Colonic mucosa (tissue), 4 donors: ENCODE measurements at regions of chr7 and their contacts with region 1.

Region 1: DNA sequence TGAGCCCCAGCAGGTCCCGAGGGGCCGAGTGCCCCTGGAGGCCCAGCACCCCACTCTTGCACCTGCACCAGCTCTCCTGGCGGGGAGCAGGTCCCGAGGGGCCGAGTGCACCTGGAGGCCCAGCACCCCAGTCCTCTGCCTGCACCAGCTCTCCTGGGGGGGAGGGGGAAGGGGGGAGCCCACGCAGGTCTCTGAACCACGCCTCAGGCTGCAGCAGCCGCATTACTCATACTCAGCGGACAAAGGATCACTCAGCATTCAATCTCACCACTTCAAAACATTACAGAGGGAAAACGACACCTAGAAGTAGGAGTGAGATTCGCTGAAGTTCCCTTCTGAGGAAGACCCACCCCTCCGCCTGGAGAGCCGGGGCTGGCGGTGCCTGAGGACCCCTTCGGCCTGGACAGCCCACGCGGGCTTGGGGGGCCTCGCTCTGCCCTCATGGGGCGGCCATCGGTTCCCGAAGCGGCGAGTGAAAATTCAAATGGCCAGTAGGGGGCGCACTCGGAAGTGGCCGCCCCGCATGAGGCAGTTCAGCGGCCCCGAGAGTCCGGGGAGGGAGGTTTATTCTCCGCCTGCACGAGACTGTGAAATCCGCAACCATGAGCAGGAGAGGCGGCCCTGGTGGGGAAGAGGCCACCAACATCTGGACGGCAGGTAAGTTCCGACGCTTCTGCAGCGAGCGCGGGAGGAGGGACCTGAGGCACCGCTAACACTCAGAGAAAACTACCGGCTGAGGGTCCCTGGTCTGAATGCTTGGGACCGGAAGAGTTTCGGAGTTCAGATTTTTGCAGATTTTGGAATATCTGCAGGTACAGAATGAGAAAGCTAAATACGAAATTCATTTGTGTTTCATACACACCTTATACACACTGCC is 1.1 kb upstream of the GPER1 start:
- DNase-seq: peak; percentile 85
- H3K4me3 ChIP-seq: peak overlapping the region; percentile 30
- H3K27ac ChIP-seq: no peak overlapping the region
- H3K4me1 ChIP-seq: no peaks in the 10 kb centered on the region
- H3K27me3 ChIP-seq: no peaks in the 10 kb centered on the region
- CTCF ChIP-seq: peak; percentile 82

Region 2: GRCh38 chr7:1159891-1160668 is 73.3 kb after region 1 on chr7 and contains the start of gene ZFAND2A:
- intact Hi-C with region 1: loop called (anchors 5 kb)
- DNase-seq: peak; percentile 100
- H3K4me3 ChIP-seq: peak within 1 kb of the TSS; percentile 55
- H3K27ac ChIP-seq: peak within 1 kb of the TSS; percentile 86
- H3K4me1 ChIP-seq: no peaks in the 10 kb centered on the region
- H3K27me3 ChIP-seq: no peaks in the 10 kb centered on the region
- CTCF ChIP-seq: no peak
- total RNA-seq, gene ZFAND2A: 26.2 to 38.7 TPM

Region 3: GRCh38 chr7:1175967-1176851 is 89.4 kb after region 1 on chr7:
- intact Hi-C with region 1: loop called (anchors 5 kb)
- DNase-seq: peak; percentile 94
- H3K4me3 ChIP-seq: peak overlapping the region; percentile 20
- H3K27ac ChIP-seq: no peak overlapping the region
- H3K4me1 ChIP-seq: no peaks in the 10 kb centered on the region
- H3K27me3 ChIP-seq: no peaks in the 10 kb centered on the region
- CTCF ChIP-seq: peak; percentile 91